Natural killer cell (primary cell): ENCODE measurements at regions of chr5 and their contacts with region 1.

Region 1: DNA sequence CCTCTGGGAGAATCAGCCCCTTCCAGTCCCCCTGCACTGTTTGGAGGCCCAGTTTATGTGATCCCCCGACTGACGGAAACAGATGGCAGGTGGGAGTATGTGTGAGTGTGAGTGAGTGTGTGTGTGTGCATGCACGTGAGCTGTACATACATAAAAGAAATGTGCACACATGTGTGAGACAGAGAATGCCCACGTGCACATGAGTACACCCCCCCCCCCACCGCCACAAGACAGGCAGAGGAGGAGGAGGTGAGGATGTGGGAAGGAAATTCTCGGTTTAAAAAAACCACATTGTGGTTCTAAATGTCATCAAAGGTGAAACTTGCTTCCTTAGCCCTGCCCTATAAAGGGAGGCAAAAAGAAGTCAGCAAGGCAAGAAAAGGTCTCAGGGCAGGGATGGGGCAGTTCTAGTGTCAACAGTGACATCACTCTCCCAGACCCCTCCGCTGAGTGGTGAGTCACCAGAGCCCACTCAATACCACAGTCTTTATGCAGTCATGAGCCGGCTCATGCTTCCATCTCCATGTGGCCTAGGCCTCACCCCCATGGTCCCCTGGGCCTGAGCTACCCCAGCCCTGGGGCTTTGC is 79.2 kb upstream of the HSPA9 start:
- DNase-seq: peak; percentile 48 to 85
- ATAC-seq: peak; percentile 75 to 90 (median 85)
- H3K4me3 ChIP-seq: no peak overlapping the region
- H3K4me3 Mint-ChIP-seq: peak overlapping the region; percentile 64
- H3K27ac ChIP-seq: no peak overlapping the region
- H3K27ac Mint-ChIP-seq: peak overlapping the region; percentile 58 to 78
- H3K4me1 ChIP-seq: peaks cover 23% of the 10 kb centered on the region
- H3K4me1 Mint-ChIP-seq: peaks cover 27 to 29% of the 10 kb centered on the region in 2 donors
- H3K27me3 ChIP-seq: peaks cover 76% of the 10 kb centered on the region
- H3K27me3 Mint-ChIP-seq: peaks cover 70 to 86% of the 10 kb centered on the region in 2 donors
- CTCF ChIP-seq: no peak

Region 2: DNA sequence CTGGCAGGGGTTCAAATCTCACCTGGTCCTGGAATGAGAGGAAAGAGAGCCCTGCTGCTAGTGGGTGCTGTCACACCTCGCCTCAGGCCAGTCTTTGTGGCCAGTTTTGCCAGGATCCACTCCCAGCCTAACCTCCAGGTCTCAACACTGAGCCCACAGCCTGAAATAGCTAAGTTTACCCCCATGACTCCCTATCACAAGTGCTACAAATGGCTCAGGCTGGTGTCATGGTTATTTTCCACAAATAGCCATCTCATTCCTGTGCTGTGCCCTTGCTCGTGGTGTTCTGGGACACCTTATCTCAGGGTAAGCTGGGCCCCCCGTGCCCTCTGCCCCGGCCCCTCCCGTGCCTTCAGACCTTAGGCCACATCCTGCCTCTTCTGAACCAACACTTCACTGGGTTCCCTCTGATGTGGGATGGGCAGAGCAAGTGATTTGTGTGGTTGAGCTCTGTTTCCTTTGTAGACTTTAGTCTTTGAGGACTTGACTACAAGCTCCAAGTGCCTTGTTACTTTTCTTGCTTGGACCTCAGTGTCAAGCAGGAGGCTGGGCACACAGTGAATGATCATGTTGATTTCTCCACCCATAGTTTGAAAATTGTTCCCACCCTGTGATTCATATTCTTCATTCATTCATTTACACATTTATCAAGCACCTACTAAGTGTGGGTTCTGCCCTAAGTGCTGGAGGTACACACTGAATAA is 14.2 kb after region 1 on chr5:
- intact Hi-C with region 1: loop called (anchors 2 kb)
- DNase-seq: peak; percentile 47 to 70
- ATAC-seq: peak; percentile 85 to 98 (median 85)
- H3K4me3 ChIP-seq: no peak overlapping the region
- H3K4me3 Mint-ChIP-seq: peak overlapping the region; percentile 69
- H3K27ac ChIP-seq: no peak overlapping the region
- H3K27ac Mint-ChIP-seq: no peak overlapping the region
- H3K4me1 ChIP-seq: peaks cover 28% of the 10 kb centered on the region
- H3K4me1 Mint-ChIP-seq: peaks cover 33 to 50% of the 10 kb centered on the region in 2 donors
- H3K27me3 ChIP-seq: peaks cover 75% of the 10 kb centered on the region
- H3K27me3 Mint-ChIP-seq: peaks cover 70 to 72% of the 10 kb centered on the region in 2 donors
- CTCF ChIP-seq: no peak

Region 3: GRCh38 chr5:139061274-139061673 is 406.9 kb after region 1 on chr5:
- intact Hi-C with region 1: no loop called
- DNase-seq: no peak
- ATAC-seq: no peak
- H3K4me3 ChIP-seq: no peak overlapping the region
- H3K4me3 Mint-ChIP-seq: no peak overlapping the region
- H3K27ac ChIP-seq: no peak overlapping the region
- H3K27ac Mint-ChIP-seq: no peak overlapping the region
- H3K4me1 ChIP-seq: no peaks in the 10 kb centered on the region
- H3K4me1 Mint-ChIP-seq: peaks cover 0 to 7% of the 10 kb centered on the region in 2 donors
- H3K27me3 ChIP-seq: no peaks in the 10 kb centered on the region
- H3K27me3 Mint-ChIP-seq: no peaks in the 10 kb centered on the region
- CTCF ChIP-seq: no peak